SK-N-SH (cell line): ENCODE measurements at regions of chr2 and their contacts with region 1.

Region 1: GRCh38 chr2:48420512-48421197 is 109.3 kb upstream of the STON1 start:
- DNase-seq: peak; percentile 92
- H3K4me3 ChIP-seq: peak overlapping the region; percentile 6 to 19; a peak in 2 of 4 replicates
- H3K27ac ChIP-seq: peak overlapping the region in 1 of 2 experiments; percentile 73; a peak in 2 of 4 replicates
- H3K4me1 ChIP-seq: peaks cover 9 to 13% of the 10 kb centered on the region in 2 experiments; a peak in 3 of 4 replicates
- H3K27me3 ChIP-seq: no peaks in the 10 kb centered on the region
- CTCF ChIP-seq: peak; percentile 99
- EP300 ChIP-seq: no peak
- RAD21 ChIP-seq: peak; percentile 100

Region 2: GRCh38 chr2:48114256-48114655 is 306.4 kb before region 1 on chr2:
- CTCF ChIA-PET with region 1: interaction called, 56 read pairs
- POLR2A ChIA-PET with region 1: no interaction called
- DNase-seq: no peak
- H3K4me3 ChIP-seq: no peak overlapping the region
- H3K27ac ChIP-seq: no peak overlapping the region
- H3K4me1 ChIP-seq: peaks cover 7 to 9% of the 10 kb centered on the region in 2 experiments; a peak in 1 of 4 replicates
- H3K27me3 ChIP-seq: no peaks in the 10 kb centered on the region
- CTCF ChIP-seq: no peak
- EP300 ChIP-seq: no peak
- RAD21 ChIP-seq: no peak

Region 3: GRCh38 chr2:48265169-48266030 is 155.3 kb before region 1 on chr2:
- CTCF ChIA-PET with region 1: no interaction called
- POLR2A ChIA-PET with region 1: no interaction called
- DNase-seq: no peak
- H3K4me3 ChIP-seq: no peak overlapping the region
- H3K27ac ChIP-seq: no peak overlapping the region
- H3K4me1 ChIP-seq: no peaks in the 10 kb centered on the region; a peak in 1 of 4 replicates
- H3K27me3 ChIP-seq: no peaks in the 10 kb centered on the region
- CTCF ChIP-seq: no peak
- EP300 ChIP-seq: no peak
- RAD21 ChIP-seq: no peak

Region 4: DNA sequence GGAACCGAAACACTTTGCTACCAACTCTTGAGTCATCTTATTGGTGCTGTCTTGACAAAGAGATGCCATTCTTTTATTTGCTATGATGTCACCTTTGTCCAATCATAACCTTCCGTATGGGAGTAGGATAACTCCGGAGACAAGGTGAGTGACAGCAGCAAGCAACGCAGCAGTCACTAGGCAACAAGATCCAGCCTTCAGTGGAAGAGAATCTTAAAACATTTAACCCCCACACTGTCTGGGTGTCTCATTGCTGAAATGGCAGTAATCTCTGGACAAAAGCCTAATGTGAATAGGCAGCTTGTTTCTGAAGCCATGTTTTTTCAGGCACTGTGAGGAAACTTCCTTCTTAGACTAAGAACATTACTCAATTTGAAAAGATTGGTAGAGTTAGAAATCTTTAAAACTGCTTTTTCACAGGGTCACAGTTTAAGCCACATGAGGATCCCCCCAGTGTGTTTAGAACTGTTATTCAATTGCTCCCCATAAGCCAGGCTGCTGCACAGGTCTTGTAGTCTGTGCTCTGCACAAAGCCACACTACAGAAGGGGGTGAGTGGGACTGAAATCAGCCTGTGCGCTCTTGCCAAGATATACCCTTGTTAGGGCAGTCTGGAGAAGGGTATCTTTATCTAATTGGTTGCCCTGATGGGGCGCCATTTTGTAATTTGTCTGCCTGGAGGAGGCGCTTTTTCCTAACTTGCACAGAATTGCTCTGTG is 22.2 kb before region 1 on chr2:
- CTCF ChIA-PET with region 1: interaction called, 10 read pairs
- POLR2A ChIA-PET with region 1: no interaction called
- DNase-seq: no peak
- H3K4me3 ChIP-seq: no peak overlapping the region
- H3K27ac ChIP-seq: no peak overlapping the region
- H3K4me1 ChIP-seq: no peaks in the 10 kb centered on the region; a peak in 2 of 4 replicates
- H3K27me3 ChIP-seq: no peaks in the 10 kb centered on the region
- CTCF ChIP-seq: no peak
- EP300 ChIP-seq: no peak
- RAD21 ChIP-seq: no peak

Region 5: GRCh38 chr2:48406116-48406515 is 14.5 kb before region 1 on chr2:
- CTCF ChIA-PET with region 1: interaction called, 12 read pairs
- POLR2A ChIA-PET with region 1: no interaction called
- DNase-seq: no peak
- H3K4me3 ChIP-seq: no peak overlapping the region
- H3K27ac ChIP-seq: no peak overlapping the region
- H3K4me1 ChIP-seq: no peaks in the 10 kb centered on the region; a peak in 1 of 4 replicates
- H3K27me3 ChIP-seq: no peaks in the 10 kb centered on the region
- CTCF ChIP-seq: no peak
- EP300 ChIP-seq: no peak
- RAD21 ChIP-seq: no peak